ENCODE measurements at regions of chr17 and their contacts with region 1.

Region 1: DNA sequence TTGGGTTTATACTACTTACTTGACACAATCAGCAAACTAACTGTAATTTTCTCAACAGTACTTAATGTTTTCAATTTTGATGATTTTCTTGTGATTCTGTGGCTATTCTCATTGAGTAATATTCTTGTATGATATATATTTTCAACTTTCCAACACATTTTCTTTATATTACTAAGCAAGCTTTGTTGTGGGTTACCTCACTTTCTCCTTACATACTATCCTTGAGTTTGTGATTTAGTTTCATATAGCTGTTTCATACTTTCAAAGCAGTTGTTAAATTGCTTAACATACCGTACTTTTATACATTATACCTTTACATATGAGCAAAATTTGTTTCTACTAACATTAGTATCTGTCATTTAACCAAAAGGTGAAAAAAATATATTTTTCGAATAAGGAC is 197.1 kb downstream of the BCAS3 start:
- DNase-seq: no peak
- ATAC-seq: no peak
- H3K4me3 ChIP-seq: no peak overlapping the region
- H3K27ac ChIP-seq: no peak overlapping the region
- H3K4me1 ChIP-seq: no peaks in the 10 kb centered on the region
- H3K27me3 ChIP-seq: no peaks in the 10 kb centered on the region
- CTCF ChIP-seq: no peak
- POLR2A ChIP-seq: no peak
- RAD21 ChIP-seq: no peak

Region 2: DNA sequence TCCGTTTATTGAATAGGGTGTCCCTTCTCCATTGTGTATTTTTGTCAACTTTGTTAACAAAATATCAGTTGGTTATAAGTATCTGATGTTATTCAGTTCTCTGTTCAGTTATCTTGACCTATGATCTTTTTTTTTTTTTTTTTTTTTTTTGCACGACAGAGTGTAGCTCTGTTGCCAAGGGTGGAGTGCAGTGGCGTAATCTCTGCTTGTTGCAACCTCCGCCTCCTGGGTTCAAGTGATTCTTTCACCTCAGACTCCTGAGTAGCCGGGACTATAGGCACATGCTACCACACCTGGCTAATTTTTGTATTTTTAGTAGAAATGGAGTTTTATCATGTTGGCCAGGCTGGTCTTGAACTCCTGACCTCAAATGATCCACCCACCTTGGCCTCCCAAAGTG is 18.7 kb after region 1 on chr17:
- CTCF ChIA-PET with region 1: no interaction called
- POLR2A ChIA-PET with region 1: no interaction called
- RAD21 ChIA-PET with region 1: no interaction called
- intact Hi-C with region 1: loop called (anchors 1 kb)
- DNase-seq: no peak
- ATAC-seq: no peak
- H3K4me3 ChIP-seq: no peak overlapping the region
- H3K27ac ChIP-seq: no peak overlapping the region
- H3K4me1 ChIP-seq: 0 out of 4 replicates have a peak, but pooled peaks cover 0 to 1% of the 10 kb centered on the region in 2 experiments
- H3K27me3 ChIP-seq: no peaks in the 10 kb centered on the region
- CTCF ChIP-seq: no peak
- POLR2A ChIP-seq: no peak
- RAD21 ChIP-seq: no peak

Region 3: GRCh38 chr17:61029193-61029592 is 154.4 kb after region 1 on chr17:
- CTCF ChIA-PET with region 1: no interaction called
- POLR2A ChIA-PET with region 1: no interaction called
- RAD21 ChIA-PET with region 1: no interaction called
- intact Hi-C with region 1: no loop called
- DNase-seq: no peak
- ATAC-seq: no peak
- H3K4me3 ChIP-seq: no peak overlapping the region
- H3K27ac ChIP-seq: no peak overlapping the region
- H3K4me1 ChIP-seq: no peaks in the 10 kb centered on the region
- H3K27me3 ChIP-seq: no peaks in the 10 kb centered on the region
- CTCF ChIP-seq: no peak
- POLR2A ChIP-seq: no peak
- RAD21 ChIP-seq: no peak

Measured in HCT116 (cell line).